ENCODE measurements at regions of chr17 and their contacts with region 1.

Region 1: GRCh38 chr17:79437856-79438457 is 172.9 kb downstream of the RBFOX3 start:
- DNase-seq: no peak
- H3K4me3 ChIP-seq: no peak overlapping the region
- H3K27ac ChIP-seq: no peak overlapping the region
- H3K4me1 ChIP-seq: no peaks in the 10 kb centered on the region; a peak in 1 of 7 replicates
- H3K27me3 ChIP-seq: no peaks in the 10 kb centered on the region
- CTCF ChIP-seq: peak in 2 of 3 experiments; percentile 27 to 36; a peak in 2 of 4 replicates
- EP300 ChIP-seq: no peak
- POLR2A ChIP-seq: no peak
- RAD21 ChIP-seq: peak; percentile 5 to 32; a peak in 2 of 4 replicates

Region 2: DNA sequence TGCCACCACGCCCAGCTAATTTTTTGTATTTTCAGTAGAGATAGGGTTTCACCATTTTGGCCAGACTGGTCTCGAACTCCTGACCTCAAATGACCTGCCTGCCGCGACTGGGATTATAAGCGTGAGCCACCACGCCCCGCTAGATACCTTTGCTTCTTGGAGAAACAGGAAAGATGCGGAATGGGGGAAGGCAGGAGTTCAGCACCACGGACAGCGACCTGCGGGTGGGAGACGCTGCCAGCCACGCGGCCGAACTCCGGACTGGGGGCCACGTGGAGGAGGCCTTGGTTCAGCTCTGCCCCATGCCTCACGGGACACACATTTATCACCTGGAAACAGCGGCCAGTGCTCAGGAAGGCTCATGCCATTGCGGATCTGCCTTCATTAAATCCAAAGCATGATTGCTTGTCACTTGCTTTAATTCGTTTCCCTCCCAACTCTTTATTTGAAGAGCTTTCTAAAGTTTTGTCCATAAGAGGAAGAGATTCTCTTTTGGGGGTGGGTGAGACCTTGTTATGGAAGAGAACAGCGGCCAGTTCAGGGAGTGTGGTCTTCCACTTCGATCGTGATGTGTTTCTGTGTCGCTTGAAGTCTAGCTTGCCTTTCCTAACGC is 143.4 kb before region 1 on chr17:
- CTCF ChIA-PET with region 1: no interaction called
- POLR2A ChIA-PET with region 1: no interaction called
- DNase-seq: peak; percentile 62 to 95
- H3K4me3 ChIP-seq: no peak overlapping the region
- H3K27ac ChIP-seq: no peak overlapping the region
- H3K4me1 ChIP-seq: no peaks in the 10 kb centered on the region
- H3K27me3 ChIP-seq: peaks cover 0 to 11% (median 1%) of the 10 kb centered on the region in 4 experiments; a peak in 4 of 7 replicates
- CTCF ChIP-seq: no peak
- EP300 ChIP-seq: no peak
- POLR2A ChIP-seq: no peak
- RAD21 ChIP-seq: peak; percentile 12 to 20; a peak in 2 of 4 replicates

Region 3: GRCh38 chr17:79427623-79428539 is 10.1 kb before region 1 on chr17:
- CTCF ChIA-PET with region 1: interaction called, 27 read pairs
- POLR2A ChIA-PET with region 1: no interaction called
- DNase-seq: no peak
- H3K4me3 ChIP-seq: no peak overlapping the region
- H3K27ac ChIP-seq: no peak overlapping the region
- H3K4me1 ChIP-seq: no peaks in the 10 kb centered on the region
- H3K27me3 ChIP-seq: no peaks in the 10 kb centered on the region; a peak in 1 of 7 replicates
- CTCF ChIP-seq: no peak
- EP300 ChIP-seq: no peak
- POLR2A ChIP-seq: no peak
- RAD21 ChIP-seq: no peak; a peak in 1 of 4 replicates